H1 (cell line): ENCODE measurements at regions of chr2 and their contacts with region 1.

Region 1: GRCh38 chr2:236143811-236144210 is 24.4 kb downstream of the GBX2 start:
- DNase-seq: no peak
- H3K4me3 ChIP-seq: no peak overlapping the region
- H3K27ac ChIP-seq: no peak overlapping the region
- H3K4me1 ChIP-seq: peaks cover 0 to 5% (median 4%) of the 10 kb centered on the region in 4 experiments; a peak in 5 of 7 replicates
- H3K27me3 ChIP-seq: peaks cover 0 to 6% (median 3%) of the 10 kb centered on the region in 4 experiments; a peak in 6 of 7 replicates
- CTCF ChIP-seq: no peak
- EP300 ChIP-seq: no peak
- POLR2A ChIP-seq: no peak
- RAD21 ChIP-seq: no peak

Region 2: GRCh38 chr2:236092714-236093113 is 51.1 kb before region 1 on chr2:
- CTCF ChIA-PET with region 1: interaction called, 10 read pairs
- POLR2A ChIA-PET with region 1: no interaction called
- DNase-seq: no peak
- H3K4me3 ChIP-seq: no peak overlapping the region
- H3K27ac ChIP-seq: no peak overlapping the region
- H3K4me1 ChIP-seq: peaks cover 0 to 11% (median 4%) of the 10 kb centered on the region in 4 experiments; a peak in 6 of 7 replicates
- H3K27me3 ChIP-seq: no peaks in the 10 kb centered on the region; a peak in 1 of 7 replicates
- CTCF ChIP-seq: peak in 1 of 3 experiments; percentile 30; a peak in 1 of 4 replicates
- EP300 ChIP-seq: no peak
- POLR2A ChIP-seq: no peak
- RAD21 ChIP-seq: peak; percentile 18 to 35; a peak in 3 of 4 replicates

Region 3: GRCh38 chr2:236119476-236119875 is 24.3 kb before region 1 on chr2:
- CTCF ChIA-PET with region 1: interaction called, 12 read pairs
- POLR2A ChIA-PET with region 1: no interaction called
- DNase-seq: no peak
- H3K4me3 ChIP-seq: no peak overlapping the region
- H3K27ac ChIP-seq: no peak overlapping the region
- H3K4me1 ChIP-seq: peaks cover 0 to 9% (median 4%) of the 10 kb centered on the region in 4 experiments; a peak in 5 of 7 replicates
- H3K27me3 ChIP-seq: peaks cover 0 to 13% (median 10%) of the 10 kb centered on the region in 4 experiments; a peak in 6 of 7 replicates
- CTCF ChIP-seq: no peak
- EP300 ChIP-seq: no peak
- POLR2A ChIP-seq: no peak
- RAD21 ChIP-seq: no peak

Region 4: DNA sequence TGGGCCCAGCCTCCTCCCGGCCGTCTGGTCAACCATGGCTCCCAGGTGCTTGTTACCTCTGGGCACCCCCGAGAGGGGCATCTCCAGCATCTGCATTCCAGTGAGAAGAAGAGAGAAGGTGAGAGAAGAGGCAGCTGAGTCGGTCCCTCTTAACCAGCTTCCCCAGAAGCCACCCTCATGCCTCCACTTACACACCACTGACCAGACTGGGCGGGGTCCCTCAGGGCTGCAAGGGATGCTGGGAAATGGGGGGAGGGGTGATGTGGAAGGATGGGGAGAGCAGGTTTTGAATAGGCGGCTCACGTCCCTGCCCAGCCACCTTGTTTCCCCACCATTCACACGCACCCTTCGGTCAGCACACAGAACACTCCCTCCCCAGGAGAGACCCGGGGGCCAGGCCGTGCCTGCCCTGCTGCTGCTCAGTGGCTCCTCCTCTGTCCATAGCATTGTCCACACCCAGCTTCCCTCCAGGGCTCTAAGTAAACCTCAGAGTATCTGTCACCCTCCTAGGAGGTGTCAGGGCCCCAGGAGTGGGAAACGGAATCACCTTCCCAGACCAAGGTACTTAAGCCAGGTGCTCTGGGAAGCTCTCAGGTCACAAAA is 10.3 kb before region 1 on chr2:
- CTCF ChIA-PET with region 1: interaction called, 17 read pairs
- POLR2A ChIA-PET with region 1: no interaction called
- DNase-seq: no peak
- H3K4me3 ChIP-seq: no peak overlapping the region
- H3K27ac ChIP-seq: no peak overlapping the region
- H3K4me1 ChIP-seq: peaks cover 0 to 9% (median 2%) of the 10 kb centered on the region in 4 experiments; a peak in 3 of 7 replicates
- H3K27me3 ChIP-seq: no peaks in the 10 kb centered on the region
- CTCF ChIP-seq: peak; percentile 26 to 66 (median 53); a peak in 3 of 4 replicates
- EP300 ChIP-seq: no peak
- POLR2A ChIP-seq: no peak
- RAD21 ChIP-seq: peak; percentile 6 to 35; a peak in 1 of 4 replicates

Region 5: DNA sequence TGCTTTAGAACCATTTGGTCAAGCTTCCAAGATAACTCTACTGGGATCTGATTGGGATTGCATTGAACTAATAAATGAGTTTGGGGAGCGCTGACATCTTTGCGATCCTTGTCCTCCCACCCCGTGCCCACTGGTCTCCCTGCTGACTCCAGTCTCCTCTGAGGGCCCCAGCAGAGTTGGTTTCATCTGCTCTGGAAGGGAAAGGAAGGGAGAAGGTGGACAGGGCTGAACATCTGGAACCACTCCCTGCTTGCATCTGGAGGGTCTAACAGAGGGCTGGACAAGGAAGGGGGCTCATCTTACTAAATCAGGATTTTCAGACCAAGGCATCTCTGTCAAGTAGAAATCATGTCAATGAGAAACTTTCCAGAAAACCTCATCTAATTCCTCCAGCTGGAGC is 11.6 kb after region 1 on chr2:
- CTCF ChIA-PET with region 1: interaction called, 42 read pairs
- POLR2A ChIA-PET with region 1: interaction called, 6 read pairs
- DNase-seq: no peak
- H3K4me3 ChIP-seq: no peak overlapping the region
- H3K27ac ChIP-seq: no peak overlapping the region
- H3K4me1 ChIP-seq: peaks cover 0 to 19% (median 13%) of the 10 kb centered on the region in 4 experiments; a peak in 6 of 7 replicates
- H3K27me3 ChIP-seq: peaks cover 28 to 54% (median 46%) of the 10 kb centered on the region in 4 experiments
- CTCF ChIP-seq: no peak
- EP300 ChIP-seq: no peak
- POLR2A ChIP-seq: no peak
- RAD21 ChIP-seq: no peak

Region 6: DNA sequence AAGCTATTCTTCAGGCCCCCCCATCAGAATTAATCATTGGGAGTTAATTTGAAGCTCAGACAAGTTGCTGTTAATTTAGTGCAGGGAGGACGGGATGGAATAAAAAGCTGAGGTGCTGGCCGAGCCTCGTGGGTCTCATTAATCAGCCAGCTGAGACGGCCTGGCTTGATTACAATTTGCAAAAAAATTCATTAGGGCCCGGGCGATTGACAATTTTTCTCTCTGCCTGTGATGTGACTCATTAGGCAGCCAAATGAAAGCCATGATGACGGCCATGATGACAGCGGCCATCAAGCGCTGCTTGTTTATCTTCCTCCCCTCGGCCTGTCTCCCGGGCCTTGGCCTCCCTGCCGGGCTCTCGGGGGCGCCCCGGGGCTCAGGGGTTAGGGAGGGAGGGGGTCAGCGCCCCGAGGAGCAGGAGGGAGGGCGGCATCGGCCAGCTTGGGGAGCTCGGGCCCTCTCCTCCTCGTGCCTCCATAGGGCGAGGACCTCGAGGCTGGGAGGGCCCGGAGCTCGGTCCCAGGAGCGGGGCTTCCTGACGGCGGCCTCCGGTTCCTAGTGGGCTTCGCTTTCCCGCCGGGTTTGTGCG is 19.2 kb after region 1 on chr2:
- CTCF ChIA-PET with region 1: interaction called, 42 read pairs
- POLR2A ChIA-PET with region 1: interaction called, 6 read pairs
- DNase-seq: no peak
- H3K4me3 ChIP-seq: peak overlapping the region in 3 of 4 experiments; percentile 0 to 60 (median 5); a peak in 3 of 8 replicates
- H3K27ac ChIP-seq: no peak overlapping the region
- H3K4me1 ChIP-seq: peaks cover 4 to 59% (median 46%) of the 10 kb centered on the region in 4 experiments
- H3K27me3 ChIP-seq: peaks cover 89 to 98% (median 95%) of the 10 kb centered on the region in 4 experiments
- CTCF ChIP-seq: no peak
- EP300 ChIP-seq: no peak
- POLR2A ChIP-seq: no peak
- RAD21 ChIP-seq: no peak

Region 7: DNA sequence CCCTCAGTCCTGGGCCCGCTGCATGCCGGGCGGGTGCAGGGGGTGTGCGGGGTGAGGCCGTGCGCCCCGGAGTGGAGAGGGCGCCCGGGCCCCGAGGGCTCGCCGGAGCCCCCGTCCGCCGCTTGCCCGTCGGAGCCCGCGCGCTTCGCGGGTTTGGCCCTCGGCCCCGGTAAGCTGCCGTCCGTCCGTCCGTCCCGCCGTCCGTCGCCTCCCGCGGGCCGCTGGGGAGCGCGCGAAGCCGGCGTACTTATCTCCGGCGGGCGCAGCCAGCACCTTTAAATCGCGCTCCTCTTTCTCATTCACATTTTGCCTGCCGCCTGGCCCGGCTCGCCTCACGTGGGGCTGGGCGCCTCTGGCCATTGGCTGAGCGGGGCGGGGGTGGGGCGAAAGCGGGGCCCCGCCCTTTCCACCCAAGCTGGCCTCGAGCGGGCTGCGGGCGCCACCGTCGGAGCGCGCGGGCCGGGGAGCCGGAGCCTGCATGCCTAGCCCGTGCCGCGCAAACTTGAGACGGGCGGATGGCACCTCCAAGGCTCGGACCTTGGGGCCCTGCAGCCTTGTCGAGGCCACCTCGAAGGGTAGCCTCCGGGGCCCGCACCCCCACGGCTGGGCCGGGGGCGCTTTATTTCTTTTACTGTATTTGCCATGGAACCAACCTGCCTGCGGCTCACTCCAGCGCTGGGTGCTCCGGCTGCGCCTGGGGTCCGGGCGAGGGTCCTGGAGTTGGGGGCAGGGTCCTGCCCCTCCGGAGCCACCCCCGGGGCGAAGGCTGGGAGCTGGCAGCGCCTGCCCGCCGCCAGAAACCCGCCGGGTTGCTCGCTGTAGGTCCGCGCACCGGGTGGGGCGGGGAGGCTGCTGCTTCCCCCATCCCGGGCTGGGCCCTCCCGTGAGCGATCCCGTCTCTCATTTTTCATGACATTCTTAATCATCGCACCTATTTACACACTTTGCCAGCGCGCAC is 24.6 kb after region 1 on chr2 and contains the start of gene GBX2:
- CTCF ChIA-PET with region 1: interaction called, 20 read pairs
- POLR2A ChIA-PET with region 1: interaction called, 5 read pairs
- DNase-seq: peak in 1 of 2 experiments; percentile 87
- H3K4me3 ChIP-seq: peak within 1 kb of the TSS; percentile 11 to 59 (median 26)
- H3K27ac ChIP-seq: no peak within 1 kb of the TSS
- H3K4me1 ChIP-seq: peaks cover 11 to 57% (median 36%) of the 10 kb centered on the region in 4 experiments
- H3K27me3 ChIP-seq: peaks cover 91 to 100% (median 97%) of the 10 kb centered on the region in 4 experiments
- CTCF ChIP-seq: no peak
- EP300 ChIP-seq: no peak
- POLR2A ChIP-seq: peak in 1 of 2 experiments; percentile 38; a peak in 1 of 3 replicates
- RAD21 ChIP-seq: no peak
- total RNA-seq, gene GBX2: 0.89 and 1.2 TPM in 2 replicates

Region 8: GRCh38 chr2:236298924-236299475 is 155.2 kb after region 1 on chr2:
- CTCF ChIA-PET with region 1: no interaction called
- POLR2A ChIA-PET with region 1: no interaction called
- DNase-seq: peak in 1 of 2 experiments; percentile 30
- H3K4me3 ChIP-seq: no peak overlapping the region
- H3K27ac ChIP-seq: no peak overlapping the region
- H3K4me1 ChIP-seq: no peaks in the 10 kb centered on the region
- H3K27me3 ChIP-seq: no peaks in the 10 kb centered on the region
- CTCF ChIP-seq: no peak
- EP300 ChIP-seq: no peak
- POLR2A ChIP-seq: no peak
- RAD21 ChIP-seq: no peak